ENCODE measurements at regions of chr18 and their contacts with region 1.

Region 1: GRCh38 chr18:13216092-13216582 is 2.4 kb upstream of the LDLRAD4 start:
- DNase-seq: peak; percentile 74 to 89 (median 81)
- ATAC-seq: peak; percentile 75 to 78
- H3K4me3 ChIP-seq: no peak overlapping the region
- H3K27ac ChIP-seq: no peak overlapping the region
- H3K4me1 ChIP-seq: peaks cover 13% of the 10 kb centered on the region
- H3K27me3 ChIP-seq: no peaks in the 10 kb centered on the region

Region 2: DNA sequence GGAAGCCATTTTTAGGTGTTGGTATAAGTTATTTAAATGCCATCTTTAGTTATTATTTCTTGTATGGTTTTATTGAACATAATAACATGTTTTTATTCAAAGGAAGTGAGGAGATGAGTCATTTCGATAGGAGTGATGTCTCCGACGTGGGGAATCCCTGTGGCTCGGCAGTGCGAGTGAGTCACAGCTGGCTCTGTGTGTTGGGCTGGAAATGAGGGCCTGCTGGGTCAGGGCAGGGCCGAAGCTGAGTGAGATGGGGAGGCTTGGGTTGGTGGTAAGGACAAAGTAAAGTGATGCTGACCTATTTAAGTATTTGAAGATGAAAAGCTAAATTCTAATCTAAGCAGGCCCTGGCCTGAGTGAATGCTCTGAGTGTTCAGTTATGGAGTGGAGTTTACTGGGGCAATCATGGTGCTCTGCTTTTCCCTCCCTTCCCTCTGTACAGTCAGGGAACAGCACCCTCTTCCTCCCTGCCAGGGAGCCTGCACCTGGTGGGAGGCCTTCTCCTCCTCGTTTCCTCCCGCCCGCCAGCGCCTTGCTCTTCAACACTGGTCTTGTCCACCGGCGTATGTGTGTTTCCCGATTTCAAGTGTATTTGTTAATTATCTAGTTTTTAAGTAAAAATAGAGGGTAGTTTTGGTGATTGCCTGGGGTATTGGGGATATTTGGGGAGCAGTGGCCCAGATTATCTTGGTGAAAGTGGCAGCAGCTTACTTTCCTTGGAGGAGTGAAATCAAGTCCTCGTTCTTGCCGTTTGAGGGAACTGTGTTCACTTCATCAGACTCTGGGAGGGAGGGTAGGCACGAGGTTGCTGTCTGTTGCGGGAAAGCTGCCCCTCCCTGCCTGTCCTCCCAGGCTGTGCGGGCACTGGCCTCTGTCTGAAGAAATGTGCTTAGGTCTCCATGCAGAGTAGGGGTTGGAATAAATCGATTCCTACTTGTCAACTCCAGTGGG is 159.4 kb after region 1 on chr18:
- intact Hi-C with region 1: loop called in 3 of 4 experiments (anchors 5 to 10 kb)
- DNase-seq: peak; percentile 85 to 88 (median 87)
- ATAC-seq: peak; percentile 81 to 94
- H3K4me3 ChIP-seq: no peak overlapping the region
- H3K27ac ChIP-seq: peak overlapping the region; percentile 48
- H3K4me1 ChIP-seq: peaks cover 15% of the 10 kb centered on the region
- H3K27me3 ChIP-seq: no peaks in the 10 kb centered on the region

Region 3: GRCh38 chr18:13464432-13465123 is 248.4 kb after region 1 on chr18:
- intact Hi-C with region 1: loop called in 1 of 4 experiments (anchors 10 kb)
- DNase-seq: peak; percentile 71 to 85 (median 85)
- ATAC-seq: peak; percentile 89 to 96
- H3K4me3 ChIP-seq: no peak overlapping the region
- H3K27ac ChIP-seq: no peak overlapping the region
- H3K4me1 ChIP-seq: no peaks in the 10 kb centered on the region
- H3K27me3 ChIP-seq: no peaks in the 10 kb centered on the region

Region 4: GRCh38 chr18:13530879-13531387 is 314.8 kb after region 1 on chr18:
- intact Hi-C with region 1: loop called (anchors 5 to 10 kb)
- DNase-seq: peak; percentile 71 to 88 (median 84)
- ATAC-seq: peak; percentile 87 to 91
- H3K4me3 ChIP-seq: no peak overlapping the region
- H3K27ac ChIP-seq: no peak overlapping the region
- H3K4me1 ChIP-seq: no peaks in the 10 kb centered on the region
- H3K27me3 ChIP-seq: no peaks in the 10 kb centered on the region

Region 5: GRCh38 chr18:13800505-13801259 is 584.5 kb after region 1 on chr18:
- intact Hi-C with region 1: loop called in 1 of 4 experiments (anchors 5 kb)
- DNase-seq: peak; percentile 73 to 88 (median 87)
- ATAC-seq: peak; percentile 93 to 96
- H3K4me3 ChIP-seq: peak overlapping the region; percentile 27
- H3K27ac ChIP-seq: no peak overlapping the region
- H3K4me1 ChIP-seq: no peaks in the 10 kb centered on the region
- H3K27me3 ChIP-seq: no peaks in the 10 kb centered on the region

Measured in right cardiac atrium (tissue), 5 donors.